GM12878 (cell line): ENCODE measurements at regions of chr16 and their contacts with region 1.

Region 1: DNA sequence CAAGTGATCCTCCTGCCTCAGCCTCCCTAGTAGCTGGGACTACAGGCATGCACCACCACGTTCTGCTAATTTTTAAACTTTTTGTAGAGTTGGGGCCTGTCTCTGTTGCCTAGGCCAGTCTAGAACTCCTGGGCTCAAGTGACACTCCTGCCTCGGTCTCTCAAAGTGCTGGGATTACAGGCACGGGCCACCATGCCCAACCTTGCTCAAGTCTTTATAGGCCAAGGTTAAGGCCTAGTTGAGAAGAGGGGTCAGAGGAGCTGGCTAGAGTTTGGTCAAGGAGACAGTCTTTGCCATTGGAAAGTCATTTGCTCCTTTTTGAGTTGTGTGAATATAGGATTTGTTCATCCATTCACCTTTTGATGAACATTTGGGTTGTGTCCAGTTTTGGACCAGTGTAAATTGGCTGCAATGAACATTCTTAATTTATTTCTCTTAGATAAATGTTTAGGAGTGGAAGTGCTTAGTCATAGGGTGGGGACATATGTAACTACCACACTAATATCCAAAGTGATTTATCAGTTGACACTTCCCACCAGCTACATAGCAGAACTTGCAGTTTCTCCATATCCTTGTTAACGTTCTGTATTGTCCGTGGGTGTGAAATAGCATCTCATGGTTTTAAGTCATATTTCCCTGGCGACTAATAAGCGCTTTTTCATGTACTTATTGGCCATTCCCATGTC is 30.7 kb upstream of the ARHGAP17 start:
- DNase-seq: no peak
- ATAC-seq: no peak
- H3K4me3 ChIP-seq: no peak overlapping the region
- H3K27ac ChIP-seq: peak overlapping the region; percentile 45; the same call in 1 of the 2 replicates
- H3K4me1 ChIP-seq: peaks cover 70% of the 10 kb centered on the region
- H3K27me3 ChIP-seq: no peaks in the 10 kb centered on the region
- CTCF ChIP-seq: no peak
- EP300 ChIP-seq: peak in 1 of 2 experiments; percentile 35; a peak in 1 of 4 replicates
- POLR2A ChIP-seq: no peak
- RAD21 ChIP-seq: no peak

Region 2: GRCh38 chr16:24652209-24652712 is 393.6 kb before region 1 on chr16:
- CTCF ChIA-PET with region 1: no interaction called
- POLR2A ChIA-PET with region 1: no interaction called
- RAD21 ChIA-PET with region 1: no interaction called
- SMC1A ChIA-PET with region 1: no interaction called
- in situ Hi-C with region 1: no loop called
- intact Hi-C with region 1: no loop called
- DNase-seq: no peak
- ATAC-seq: no peak
- H3K4me3 ChIP-seq: no peak overlapping the region
- H3K27ac ChIP-seq: no peak overlapping the region
- H3K4me1 ChIP-seq: no peaks in the 10 kb centered on the region
- H3K27me3 ChIP-seq: no peaks in the 10 kb centered on the region
- CTCF ChIP-seq: no peak
- EP300 ChIP-seq: no peak
- POLR2A ChIP-seq: no peak
- RAD21 ChIP-seq: no peak

Region 3: DNA sequence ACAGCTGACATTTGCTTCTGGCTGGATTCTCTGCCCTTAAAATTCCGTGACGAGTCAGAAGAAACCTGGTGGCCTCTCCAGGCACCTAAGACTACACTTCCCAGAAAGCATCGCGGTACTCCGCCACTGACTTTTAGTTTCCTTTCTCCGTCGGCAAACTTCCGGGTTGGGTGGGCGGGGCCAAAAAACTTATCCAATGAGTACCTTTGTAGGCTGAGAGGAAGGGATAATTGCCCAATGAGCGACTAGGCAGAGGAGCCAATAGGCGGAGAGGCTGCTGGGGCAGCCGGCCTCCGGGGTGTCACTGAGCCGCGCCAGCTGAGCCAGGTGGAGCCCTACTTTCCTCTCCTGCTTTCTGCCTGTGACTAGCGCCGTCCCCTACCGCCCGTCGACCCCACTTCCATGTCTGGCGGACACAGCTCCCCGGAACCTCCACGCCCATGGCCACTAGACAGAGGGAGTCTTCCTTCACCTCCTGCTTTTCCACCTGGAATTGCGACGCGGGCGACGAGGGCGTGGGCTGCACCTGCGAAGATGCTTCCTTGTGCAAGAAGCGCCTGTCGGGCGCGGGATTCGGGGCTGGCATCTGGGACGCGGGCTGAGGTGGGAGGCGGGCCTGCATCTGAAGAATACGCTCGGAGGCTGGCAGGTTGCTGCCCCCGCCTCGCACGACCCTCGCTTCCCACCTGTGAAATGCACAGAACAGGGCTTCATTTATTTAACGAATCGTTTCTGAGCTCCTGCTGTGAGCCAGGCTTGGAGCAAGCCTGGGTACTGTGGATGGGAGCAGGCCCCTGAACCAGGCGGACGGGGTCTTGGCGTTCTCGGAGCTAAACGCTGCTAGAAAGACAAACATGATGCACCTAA is 14.2 kb before region 1 on chr16:
- CTCF ChIA-PET with region 1: interaction called, 4 read pairs
- POLR2A ChIA-PET with region 1: interaction called, 14 read pairs
- RAD21 ChIA-PET with region 1: interaction called, 76 read pairs
- SMC1A ChIA-PET with region 1: interaction called, 39 read pairs
- in situ Hi-C with region 1: no loop called
- intact Hi-C with region 1: no loop called
- DNase-seq: peak; percentile 96
- ATAC-seq: peak; percentile 98
- H3K4me3 ChIP-seq: peak overlapping the region; percentile 98
- H3K27ac ChIP-seq: peak overlapping the region; percentile 91
- H3K4me1 ChIP-seq: peaks cover 16% of the 10 kb centered on the region
- H3K27me3 ChIP-seq: no peaks in the 10 kb centered on the region
- CTCF ChIP-seq: no peak
- EP300 ChIP-seq: no peak
- POLR2A ChIP-seq: peak; percentile 85
- RAD21 ChIP-seq: no peak

Region 4: DNA sequence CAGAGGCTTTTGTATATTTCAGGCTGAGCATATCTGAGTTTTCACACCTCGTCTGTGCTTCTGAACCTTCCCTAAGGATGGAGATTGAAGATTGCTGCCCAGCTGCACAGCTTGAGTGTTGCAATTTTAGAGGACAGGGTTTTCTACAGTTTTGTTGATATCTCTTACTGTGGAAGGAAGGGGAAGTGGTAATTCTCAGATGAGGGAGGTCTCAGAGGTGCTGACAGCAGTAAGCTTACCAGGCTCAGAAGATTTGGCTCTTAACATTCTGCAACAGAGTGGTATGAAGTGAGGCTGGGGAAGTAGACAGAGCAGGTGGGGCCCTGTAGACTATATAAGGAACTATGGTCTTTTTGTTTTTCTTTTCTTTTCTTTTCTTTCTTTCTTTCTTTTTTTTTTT is 15.1 kb after region 1 on chr16:
- CTCF ChIA-PET with region 1: interaction called, 6 read pairs
- POLR2A ChIA-PET with region 1: interaction called, 8 read pairs
- RAD21 ChIA-PET with region 1: interaction called, 11 read pairs
- SMC1A ChIA-PET with region 1: interaction called, 32 read pairs
- in situ Hi-C with region 1: no loop called
- intact Hi-C with region 1: no loop called
- DNase-seq: no peak
- ATAC-seq: peak; percentile 69
- H3K4me3 ChIP-seq: no peak overlapping the region
- H3K27ac ChIP-seq: no peak overlapping the region
- H3K4me1 ChIP-seq: peaks cover 18% of the 10 kb centered on the region
- H3K27me3 ChIP-seq: no peaks in the 10 kb centered on the region
- CTCF ChIP-seq: no peak
- EP300 ChIP-seq: no peak
- POLR2A ChIP-seq: no peak
- RAD21 ChIP-seq: no peak